ENCODE measurements at regions of chrX and their contacts with region 1.

Region 1: DNA sequence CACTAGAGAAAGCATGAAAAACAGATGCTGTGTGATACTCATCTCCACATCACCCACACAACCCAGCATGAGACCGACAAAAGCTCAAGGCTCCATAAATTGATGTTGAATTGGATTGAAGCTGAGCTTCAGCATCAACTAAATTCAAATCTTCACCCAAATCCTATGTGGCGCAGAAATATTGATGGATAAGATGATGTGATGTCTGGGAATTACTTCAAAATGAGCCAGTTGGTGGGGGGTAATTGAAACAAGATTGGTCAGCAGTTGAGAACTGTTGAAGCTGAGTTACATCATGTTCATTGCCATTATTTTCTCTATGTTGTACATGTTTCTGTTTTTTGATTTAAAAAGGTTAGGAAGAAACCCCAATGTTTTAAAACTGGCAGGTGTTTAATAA is 166.5 kb upstream of the STS start:
- DNase-seq: no peak
- ATAC-seq: no peak
- H3K4me3 ChIP-seq: no peak overlapping the region
- H3K27ac ChIP-seq: no peak overlapping the region
- H3K4me1 ChIP-seq: peaks cover 2% of the 10 kb centered on the region; the same call in 1 of the 2 replicates
- H3K27me3 ChIP-seq: no peaks in the 10 kb centered on the region
- CTCF ChIP-seq: no peak
- POLR2A ChIP-seq: no peak
- RAD21 ChIP-seq: no peak

Region 2: DNA sequence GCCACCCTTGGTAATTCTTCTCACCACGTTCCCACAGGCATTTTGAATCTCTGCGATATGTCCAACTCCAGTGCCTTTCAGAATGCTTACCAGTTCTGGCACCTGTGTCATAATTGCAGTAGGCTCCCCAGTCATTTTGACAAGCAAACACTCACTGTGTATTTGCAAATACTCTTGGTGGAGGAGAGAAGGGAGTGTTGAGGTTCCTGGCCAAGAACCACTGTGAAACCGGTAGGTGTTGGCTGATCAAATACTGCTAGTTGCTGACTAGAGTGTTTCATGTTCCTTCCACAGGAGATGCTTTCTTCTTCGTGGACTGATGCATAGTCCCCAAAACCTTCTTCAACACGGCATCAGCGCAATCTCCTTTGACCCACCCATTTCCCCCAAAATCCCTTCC is 736.3 kb before region 1 on chrX:
- CTCF ChIA-PET with region 1: no interaction called
- POLR2A ChIA-PET with region 1: no interaction called
- dilution Hi-C with region 1: no loop called
- in situ Hi-C with region 1: no loop called
- intact Hi-C with region 1: no loop called
- DNase-seq: no peak
- ATAC-seq: no peak
- H3K4me3 ChIP-seq: no peak overlapping the region
- H3K27ac ChIP-seq: no peak overlapping the region
- H3K4me1 ChIP-seq: no peaks in the 10 kb centered on the region
- H3K27me3 ChIP-seq: no peaks in the 10 kb centered on the region
- CTCF ChIP-seq: no peak
- POLR2A ChIP-seq: no peak
- RAD21 ChIP-seq: no peak

Region 3: GRCh38 chrX:7059214-7059838 is 78.3 kb after region 1 on chrX:
- CTCF ChIA-PET with region 1: no interaction called
- POLR2A ChIA-PET with region 1: no interaction called
- dilution Hi-C with region 1: no loop called
- in situ Hi-C with region 1: no loop called
- intact Hi-C with region 1: no loop called
- DNase-seq: no peak
- ATAC-seq: no peak
- H3K4me3 ChIP-seq: no peak overlapping the region
- H3K27ac ChIP-seq: no peak overlapping the region
- H3K4me1 ChIP-seq: peaks cover 4% of the 10 kb centered on the region
- H3K27me3 ChIP-seq: no peaks in the 10 kb centered on the region
- CTCF ChIP-seq: no peak
- POLR2A ChIP-seq: no peak
- RAD21 ChIP-seq: no peak

Region 4: DNA sequence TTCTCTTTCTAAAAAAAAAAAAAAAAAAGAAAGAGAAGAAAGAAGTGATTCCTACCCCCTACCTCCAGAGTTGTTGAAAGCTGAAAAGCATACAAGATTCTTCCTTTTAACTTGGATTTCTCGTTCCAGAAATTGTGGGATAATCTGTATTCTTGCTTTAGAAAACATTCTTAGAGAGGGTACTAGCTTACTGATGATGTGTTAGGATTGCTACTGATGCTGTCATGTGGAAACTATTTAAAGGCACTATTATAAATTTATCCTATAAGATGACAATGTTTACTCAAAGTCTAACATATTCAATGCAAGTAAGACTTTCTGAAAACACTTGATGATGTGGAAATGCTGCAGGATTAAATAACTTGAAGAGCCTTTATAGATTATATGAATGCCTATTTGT is 370.9 kb after region 1 on chrX:
- CTCF ChIA-PET with region 1: interaction called, 11 read pairs
- POLR2A ChIA-PET with region 1: no interaction called
- dilution Hi-C with region 1: no loop called
- in situ Hi-C with region 1: no loop called
- intact Hi-C with region 1: no loop called
- DNase-seq: peak; percentile 59
- ATAC-seq: peak; percentile 75
- H3K4me3 ChIP-seq: no peak overlapping the region
- H3K27ac ChIP-seq: no peak overlapping the region
- H3K4me1 ChIP-seq: 0 out of 2 replicates have a peak, but pooled peaks cover 2% of the 10 kb centered on the region
- H3K27me3 ChIP-seq: no peaks in the 10 kb centered on the region
- CTCF ChIP-seq: no peak
- POLR2A ChIP-seq: no peak
- RAD21 ChIP-seq: no peak

Region 5: DNA sequence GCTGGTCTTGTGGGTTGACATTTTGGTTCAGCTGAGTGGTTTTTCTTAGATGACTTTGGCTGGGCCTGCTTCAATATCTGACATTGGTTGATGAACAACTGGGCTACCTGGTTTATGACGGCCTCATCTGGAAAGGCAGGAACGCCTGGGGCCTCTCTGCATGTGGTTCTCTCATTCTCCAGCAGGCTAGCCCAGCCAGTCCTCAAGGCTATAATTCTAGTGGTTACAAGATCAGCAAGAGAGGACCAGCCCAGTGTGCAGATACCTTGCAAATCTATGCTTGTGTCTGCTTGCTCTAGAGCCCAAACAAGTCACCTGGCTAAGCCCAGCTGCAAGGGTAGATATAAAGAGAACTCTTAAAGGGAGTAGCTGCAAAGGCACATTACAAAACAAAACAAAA is 381.1 kb after region 1 on chrX:
- CTCF ChIA-PET with region 1: no interaction called
- POLR2A ChIA-PET with region 1: no interaction called
- dilution Hi-C with region 1: no loop called
- in situ Hi-C with region 1: no loop called
- intact Hi-C with region 1: no loop called
- DNase-seq: no peak
- ATAC-seq: no peak
- H3K4me3 ChIP-seq: no peak overlapping the region
- H3K27ac ChIP-seq: no peak overlapping the region
- H3K4me1 ChIP-seq: no peaks in the 10 kb centered on the region
- H3K27me3 ChIP-seq: no peaks in the 10 kb centered on the region; the same call in 1 of the 2 replicates
- CTCF ChIP-seq: no peak
- POLR2A ChIP-seq: no peak
- RAD21 ChIP-seq: no peak

Region 6: GRCh38 chrX:7620560-7620959 is 639.6 kb after region 1 on chrX:
- CTCF ChIA-PET with region 1: no interaction called
- POLR2A ChIA-PET with region 1: no interaction called
- dilution Hi-C with region 1: no loop called
- in situ Hi-C with region 1: no loop called
- intact Hi-C with region 1: no loop called
- DNase-seq: no peak
- ATAC-seq: no peak
- H3K4me3 ChIP-seq: no peak overlapping the region
- H3K27ac ChIP-seq: no peak overlapping the region
- H3K4me1 ChIP-seq: no peaks in the 10 kb centered on the region
- H3K27me3 ChIP-seq: no peaks in the 10 kb centered on the region
- CTCF ChIP-seq: no peak
- POLR2A ChIP-seq: no peak
- RAD21 ChIP-seq: no peak

Measured in IMR-90 (cell line).